ENCODE measurements at regions of chr6 and their contacts with region 1.

Region 1: DNA sequence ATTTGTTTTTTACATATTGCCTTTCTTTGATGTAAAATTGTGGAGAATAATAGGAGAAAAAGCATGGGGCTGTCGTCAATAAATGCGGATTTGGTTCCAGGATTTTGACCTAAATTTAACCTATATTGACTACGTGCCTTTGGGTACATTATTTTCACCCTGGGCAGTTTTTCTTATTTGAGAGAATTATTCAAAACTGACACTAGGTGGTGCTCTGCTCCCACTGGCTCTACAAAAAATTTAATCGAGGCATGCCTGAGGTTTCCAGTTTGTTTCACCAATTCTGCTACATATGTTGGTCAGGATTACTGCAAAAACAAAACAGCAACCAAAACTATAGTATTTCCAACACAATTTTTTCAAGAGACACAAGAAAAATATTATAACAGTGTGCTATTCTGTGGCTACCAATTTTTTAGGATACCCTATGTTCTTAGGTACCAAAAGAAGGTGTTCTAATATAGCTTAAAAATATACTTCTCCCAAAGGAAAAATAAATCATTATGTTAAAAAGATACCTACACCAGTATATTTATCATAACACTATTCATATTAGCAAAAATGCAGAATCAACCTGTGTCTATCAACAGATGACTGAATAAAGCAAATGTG is 48.6 kb upstream of the FABP7 start:
- DNase-seq: no peak
- H3K4me3 ChIP-seq: no peak overlapping the region
- H3K27ac ChIP-seq: no peak overlapping the region
- H3K4me1 ChIP-seq: no peaks in the 10 kb centered on the region
- H3K27me3 ChIP-seq: no peaks in the 10 kb centered on the region
- CTCF ChIP-seq: peak in 10 of 11 experiments; percentile 6 to 61 (median 52)
- POLR2A ChIP-seq: no peak

Region 2: DNA sequence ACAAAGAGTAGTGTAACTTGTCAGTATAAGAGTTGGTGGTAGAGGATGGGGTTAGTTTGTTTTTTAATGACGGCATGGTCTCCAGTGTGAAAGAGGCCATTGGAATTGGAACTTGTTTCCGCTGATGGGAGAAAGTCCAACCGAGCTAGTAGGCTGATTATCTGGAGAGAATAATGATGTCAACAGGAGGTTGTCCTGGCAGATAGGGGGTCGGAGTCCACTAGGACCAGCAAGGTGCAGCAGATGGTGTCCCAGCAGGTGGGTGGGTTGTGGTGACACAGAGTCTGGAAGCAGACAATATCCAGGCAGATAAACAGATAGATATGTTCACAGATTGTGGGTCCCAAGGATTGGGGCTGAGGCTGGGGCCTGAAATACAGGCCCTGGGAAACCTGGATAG is 85.6 kb before region 1 on chr6:
- intact Hi-C with region 1: no loop called
- DNase-seq: no peak
- H3K4me3 ChIP-seq: no peak overlapping the region
- H3K27ac ChIP-seq: no peak overlapping the region
- H3K4me1 ChIP-seq: no peaks in the 10 kb centered on the region
- H3K27me3 ChIP-seq: no peaks in the 10 kb centered on the region
- CTCF ChIP-seq: no peak
- POLR2A ChIP-seq: no peak

Region 3: GRCh38 chr6:122673343-122673961 is 57.4 kb before region 1 on chr6:
- intact Hi-C with region 1: no loop called
- DNase-seq: no peak
- H3K4me3 ChIP-seq: no peak overlapping the region
- H3K27ac ChIP-seq: no peak overlapping the region
- H3K4me1 ChIP-seq: no peaks in the 10 kb centered on the region
- H3K27me3 ChIP-seq: no peaks in the 10 kb centered on the region
- CTCF ChIP-seq: no peak
- POLR2A ChIP-seq: no peak

Region 4: DNA sequence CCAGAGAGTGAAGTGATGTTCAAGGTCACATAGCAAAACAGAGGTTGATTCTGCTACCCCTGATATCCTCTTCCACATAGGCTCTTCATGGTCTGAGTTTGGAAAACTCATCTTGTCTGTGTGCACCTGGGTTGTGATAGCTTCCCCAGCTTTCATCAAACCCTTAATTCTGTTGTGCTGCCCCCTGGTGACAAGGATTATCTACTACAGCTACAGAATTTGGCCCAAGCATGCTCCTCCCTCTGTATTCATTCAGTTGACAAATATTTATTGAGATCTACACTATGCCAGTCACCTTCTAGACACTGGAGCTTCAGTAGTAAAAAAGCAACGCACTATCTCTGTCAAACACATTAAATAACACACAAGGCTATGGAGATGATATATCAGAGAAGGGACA is 108.6 kb after region 1 on chr6:
- intact Hi-C with region 1: loop called (anchors 2 kb)
- DNase-seq: no peak
- H3K4me3 ChIP-seq: no peak overlapping the region
- H3K27ac ChIP-seq: no peak overlapping the region
- H3K4me1 ChIP-seq: no peaks in the 10 kb centered on the region
- H3K27me3 ChIP-seq: no peaks in the 10 kb centered on the region
- CTCF ChIP-seq: peak; percentile 47 to 78 (median 70)
- POLR2A ChIP-seq: no peak

Region 5: DNA sequence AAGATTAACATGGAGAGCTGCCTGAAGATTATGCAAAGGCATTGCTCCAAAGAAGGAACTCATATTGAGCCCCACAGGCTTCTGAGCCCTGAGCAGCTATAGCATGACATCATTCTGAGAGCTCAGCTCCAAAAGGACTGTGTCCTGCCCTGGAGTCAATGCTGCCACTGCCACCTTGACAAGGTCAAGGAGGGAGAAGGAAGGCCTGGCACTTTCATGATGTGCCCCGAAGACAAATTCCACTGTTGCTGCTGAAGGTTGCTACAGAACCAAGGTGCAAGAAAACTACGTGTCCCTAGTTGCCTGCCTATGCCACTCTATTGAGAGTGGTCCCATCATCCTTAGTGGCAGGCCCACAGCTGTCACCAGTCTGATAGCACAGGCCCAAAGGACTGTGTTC is 512.0 kb after region 1 on chr6:
- intact Hi-C with region 1: no loop called
- DNase-seq: no peak
- H3K4me3 ChIP-seq: no peak overlapping the region
- H3K27ac ChIP-seq: no peak overlapping the region
- H3K4me1 ChIP-seq: no peaks in the 10 kb centered on the region
- H3K27me3 ChIP-seq: no peaks in the 10 kb centered on the region
- CTCF ChIP-seq: no peak
- POLR2A ChIP-seq: no peak

Region 6: GRCh38 chr6:123316733-123317323 is 585.9 kb after region 1 on chr6:
- intact Hi-C with region 1: loop called (anchors 10 kb)
- DNase-seq: no peak
- H3K4me3 ChIP-seq: no peak overlapping the region
- H3K27ac ChIP-seq: no peak overlapping the region
- H3K4me1 ChIP-seq: no peaks in the 10 kb centered on the region
- H3K27me3 ChIP-seq: no peaks in the 10 kb centered on the region
- CTCF ChIP-seq: peak in 7 of 11 experiments; percentile 8 to 47 (median 42)
- POLR2A ChIP-seq: no peak

Measured in spleen (tissue), 13 donors.